ENCODE measurements at regions of chr17 and their contacts with region 1.

Region 1: GRCh38 chr17:64145757-64146417 is 15.9 kb upstream of the ERN1 start:
- DNase-seq: peak; percentile 99
- ATAC-seq: peak; percentile 87 to 92
- H3K4me3 ChIP-seq: peak overlapping the region; percentile 80 to 95 (median 88)
- H3K27ac ChIP-seq: peak overlapping the region; percentile 98 to 99 (median 98)
- H3K4me1 ChIP-seq: peaks cover 31 to 47% of the 10 kb centered on the region in 2 donors
- H3K27me3 ChIP-seq: no peaks in the 10 kb centered on the region
- CTCF ChIP-seq: peak in 1 of 5 experiments; percentile 15
- POLR2A ChIP-seq: peak; percentile 99 to 100

Region 2: GRCh38 chr17:63919311-63919723 is 226.6 kb before region 1 on chr17:
- in situ Hi-C with region 1: loop called in 3 of 4 experiments (anchors 10 to 25 kb)
- intact Hi-C with region 1: no loop called
- DNase-seq: peak in 1 of 2 donors; percentile 61
- ATAC-seq: peak; percentile 87 to 93
- H3K4me3 ChIP-seq: no peak overlapping the region
- H3K27ac ChIP-seq: no peak overlapping the region
- H3K4me1 ChIP-seq: peaks cover 3 to 4% of the 10 kb centered on the region in 2 donors
- H3K27me3 ChIP-seq: no peaks in the 10 kb centered on the region
- CTCF ChIP-seq: peak; percentile 90 to 99 (median 97)
- POLR2A ChIP-seq: no peak

Region 3: GRCh38 chr17:64115871-64116534 is 29.9 kb before region 1 on chr17:
- in situ Hi-C with region 1: no loop called
- intact Hi-C with region 1: no loop called
- DNase-seq: no peak
- ATAC-seq: no peak
- H3K4me3 ChIP-seq: no peak overlapping the region
- H3K27ac ChIP-seq: no peak overlapping the region
- H3K4me1 ChIP-seq: peaks cover 26 to 27% of the 10 kb centered on the region in 2 donors
- H3K27me3 ChIP-seq: no peaks in the 10 kb centered on the region
- CTCF ChIP-seq: no peak
- POLR2A ChIP-seq: no peak

Region 4: GRCh38 chr17:64129764-64130558 is 15.9 kb before region 1 on chr17 and contains the start of gene ERN1:
- in situ Hi-C with region 1: no loop called
- intact Hi-C with region 1: loop called (anchors 1 kb)
- DNase-seq: peak; percentile 87 to 93
- ATAC-seq: peak; percentile 85 to 88
- H3K4me3 ChIP-seq: peak within 1 kb of the TSS; percentile 60 to 85 (median 78)
- H3K27ac ChIP-seq: peak within 1 kb of the TSS; percentile 88 to 95 (median 92)
- H3K4me1 ChIP-seq: peaks cover 17 to 21% of the 10 kb centered on the region in 2 donors
- H3K27me3 ChIP-seq: no peaks in the 10 kb centered on the region
- CTCF ChIP-seq: peak in 2 of 5 experiments; percentile 3 to 15
- POLR2A ChIP-seq: peak; percentile 89 to 94
- total RNA-seq, gene ERN1: 9.7 to 27.5 (median 13.8) TPM

Region 5: GRCh38 chr17:64216338-64217248 is 70.7 kb after region 1 on chr17:
- in situ Hi-C with region 1: no loop called
- intact Hi-C with region 1: loop called (anchors 5 kb)
- DNase-seq: peak in 1 of 2 donors; percentile 75
- ATAC-seq: peak; percentile 75 to 80
- H3K4me3 ChIP-seq: peak overlapping the region in 1 of 4 donors; percentile 2
- H3K27ac ChIP-seq: peak overlapping the region; percentile 80 to 90 (median 86)
- H3K4me1 ChIP-seq: peaks cover 30 to 70% of the 10 kb centered on the region in 2 donors
- H3K27me3 ChIP-seq: no peaks in the 10 kb centered on the region
- CTCF ChIP-seq: peak in 2 of 5 experiments; percentile 27 to 30
- POLR2A ChIP-seq: no peak

Region 6: GRCh38 chr17:64281962-64282727 is 136.3 kb after region 1 on chr17:
- in situ Hi-C with region 1: loop called (anchors 5 to 10 kb)
- intact Hi-C with region 1: loop called (anchors 1 kb)
- DNase-seq: peak; percentile 35 to 45
- ATAC-seq: peak; percentile 35 to 41
- H3K4me3 ChIP-seq: peak overlapping the region; percentile 14 to 47 (median 36)
- H3K27ac ChIP-seq: peak overlapping the region; percentile 51 to 71 (median 59)
- H3K4me1 ChIP-seq: peaks cover 23 to 28% of the 10 kb centered on the region in 2 donors
- H3K27me3 ChIP-seq: no peaks in the 10 kb centered on the region
- CTCF ChIP-seq: peak; percentile 72 to 89 (median 85)
- POLR2A ChIP-seq: no peak

Region 7: GRCh38 chr17:65055348-65056261 is 909.7 kb after region 1 on chr17:
- in situ Hi-C with region 1: no loop called
- intact Hi-C with region 1: loop called (anchors 10 kb)
- DNase-seq: peak; percentile 79 to 84
- ATAC-seq: peak; percentile 60 to 72
- H3K4me3 ChIP-seq: peak overlapping the region; percentile 72 to 96 (median 90)
- H3K27ac ChIP-seq: peak overlapping the region; percentile 98 to 100 (median 99)
- H3K4me1 ChIP-seq: peaks cover 35 to 38% of the 10 kb centered on the region in 2 donors
- H3K27me3 ChIP-seq: no peaks in the 10 kb centered on the region
- CTCF ChIP-seq: no peak
- POLR2A ChIP-seq: peak; percentile 88 to 89